Naive thymus-derived CD4-positive, alpha-beta T cell (primary cell): ENCODE measurements at regions of chr1 and their contacts with region 1.

Region 1: DNA sequence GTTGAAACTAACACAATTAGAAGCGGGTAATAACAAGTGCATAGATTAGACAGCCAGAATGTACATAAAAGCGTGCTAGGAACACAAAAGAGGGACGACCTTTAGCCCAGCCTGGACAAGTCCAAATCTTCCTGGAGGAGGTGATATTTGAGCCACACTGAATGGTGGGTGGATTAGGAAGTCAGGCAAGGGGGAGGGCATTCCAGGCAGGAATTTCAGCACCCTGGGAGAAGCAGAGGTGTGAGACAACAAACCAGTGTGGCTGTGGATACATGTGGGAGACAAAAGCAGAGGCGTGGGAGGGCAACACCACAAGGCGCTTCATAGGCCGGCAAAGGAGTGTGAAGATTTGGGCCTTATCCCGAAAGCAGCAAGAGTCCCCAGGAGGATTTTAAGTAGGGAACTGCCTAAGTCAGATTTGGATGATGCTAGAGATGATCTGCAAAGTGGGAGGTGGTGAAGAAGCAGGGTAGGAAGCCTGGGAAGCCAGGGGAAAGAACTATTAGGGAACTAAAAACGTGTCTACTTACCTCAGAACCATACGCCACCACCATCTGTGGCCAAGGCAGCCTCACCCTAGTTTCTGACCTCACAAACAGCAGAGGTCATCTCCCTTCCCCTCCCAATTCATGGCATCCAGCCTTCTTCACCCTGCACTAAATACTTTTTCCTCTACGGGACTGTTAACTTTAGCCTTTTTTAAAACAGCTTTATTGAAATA is 81.8 kb downstream of the GLUL start:
- DNase-seq: no peak
- ATAC-seq: no peak
- H3K4me3 ChIP-seq: no peak overlapping the region
- H3K4me3 Mint-ChIP-seq: no peak overlapping the region
- H3K27ac ChIP-seq: no peak overlapping the region
- H3K27ac Mint-ChIP-seq: no peak overlapping the region
- H3K4me1 ChIP-seq: no peaks in the 10 kb centered on the region
- H3K4me1 Mint-ChIP-seq: peaks cover 0 to 2% (median 0%) of the 10 kb centered on the region in 7 donors
- H3K27me3 ChIP-seq: no peaks in the 10 kb centered on the region
- H3K27me3 Mint-ChIP-seq: peaks cover 0 to 12% (median 0%) of the 10 kb centered on the region in 5 donors

Region 2: DNA sequence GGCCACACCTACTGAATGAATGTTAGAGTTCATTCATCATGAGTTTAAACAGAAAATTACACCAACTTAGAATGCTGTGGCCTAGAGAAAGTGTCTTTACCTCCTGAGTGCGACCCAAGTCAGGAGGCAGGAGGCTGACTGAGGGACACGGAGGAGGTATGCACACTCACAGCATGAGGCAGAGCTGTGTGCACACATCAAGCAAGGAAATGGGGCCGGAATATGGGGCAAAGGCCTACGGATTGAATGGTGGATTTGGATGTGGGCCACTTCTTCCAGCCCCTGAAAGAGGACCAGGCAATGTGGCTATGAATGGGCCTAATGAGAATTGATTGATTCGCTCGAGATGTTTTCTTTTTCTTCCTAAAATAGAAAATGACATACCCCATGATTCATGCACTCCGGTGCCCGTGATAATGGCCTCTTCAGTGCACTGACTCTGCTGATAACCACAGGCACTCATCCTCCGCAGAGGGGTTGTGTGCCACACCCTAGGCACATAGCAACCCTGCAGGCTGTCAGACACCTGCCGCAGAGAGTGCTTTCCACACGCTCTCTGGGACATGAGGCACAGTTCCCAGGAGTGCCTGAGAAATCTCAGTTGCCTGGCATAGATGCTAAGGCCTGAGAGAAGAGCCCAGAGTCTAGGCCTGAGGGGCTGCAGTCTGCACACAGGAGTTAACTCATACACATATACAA is 73.7 kb before region 1 on chr1:
- CTCF ChIA-PET with region 1: no interaction called
- POLR2A ChIA-PET with region 1: no interaction called
- intact Hi-C with region 1: loop called in 1 of 2 experiments (anchors 2 kb)
- DNase-seq: no peak
- ATAC-seq: peak; percentile 18
- H3K4me3 ChIP-seq: no peak overlapping the region
- H3K4me3 Mint-ChIP-seq: peak overlapping the region in 3 of 10 donors; percentile 0 to 30 (median 10)
- H3K27ac ChIP-seq: no peak overlapping the region
- H3K27ac Mint-ChIP-seq: peak overlapping the region in 4 of 9 donors; percentile 12 to 71 (median 42)
- H3K4me1 ChIP-seq: no peaks in the 10 kb centered on the region
- H3K4me1 Mint-ChIP-seq: peaks cover 6 to 23% (median 13%) of the 10 kb centered on the region in 7 donors
- H3K27me3 ChIP-seq: no peaks in the 10 kb centered on the region
- H3K27me3 Mint-ChIP-seq: peaks cover 0 to 4% (median 0%) of the 10 kb centered on the region in 5 donors

Region 3: GRCh38 chr1:182507665-182508064 is 197.9 kb after region 1 on chr1:
- CTCF ChIA-PET with region 1: no interaction called
- POLR2A ChIA-PET with region 1: no interaction called
- intact Hi-C with region 1: no loop called
- DNase-seq: no peak
- ATAC-seq: no peak
- H3K4me3 ChIP-seq: no peak overlapping the region
- H3K4me3 Mint-ChIP-seq: no peak overlapping the region
- H3K27ac ChIP-seq: no peak overlapping the region
- H3K27ac Mint-ChIP-seq: no peak overlapping the region
- H3K4me1 ChIP-seq: no peaks in the 10 kb centered on the region
- H3K4me1 Mint-ChIP-seq: no peaks in the 10 kb centered on the region
- H3K27me3 ChIP-seq: no peaks in the 10 kb centered on the region
- H3K27me3 Mint-ChIP-seq: peaks cover 5 to 27% (median 19%) of the 10 kb centered on the region in 5 donors

Region 4: DNA sequence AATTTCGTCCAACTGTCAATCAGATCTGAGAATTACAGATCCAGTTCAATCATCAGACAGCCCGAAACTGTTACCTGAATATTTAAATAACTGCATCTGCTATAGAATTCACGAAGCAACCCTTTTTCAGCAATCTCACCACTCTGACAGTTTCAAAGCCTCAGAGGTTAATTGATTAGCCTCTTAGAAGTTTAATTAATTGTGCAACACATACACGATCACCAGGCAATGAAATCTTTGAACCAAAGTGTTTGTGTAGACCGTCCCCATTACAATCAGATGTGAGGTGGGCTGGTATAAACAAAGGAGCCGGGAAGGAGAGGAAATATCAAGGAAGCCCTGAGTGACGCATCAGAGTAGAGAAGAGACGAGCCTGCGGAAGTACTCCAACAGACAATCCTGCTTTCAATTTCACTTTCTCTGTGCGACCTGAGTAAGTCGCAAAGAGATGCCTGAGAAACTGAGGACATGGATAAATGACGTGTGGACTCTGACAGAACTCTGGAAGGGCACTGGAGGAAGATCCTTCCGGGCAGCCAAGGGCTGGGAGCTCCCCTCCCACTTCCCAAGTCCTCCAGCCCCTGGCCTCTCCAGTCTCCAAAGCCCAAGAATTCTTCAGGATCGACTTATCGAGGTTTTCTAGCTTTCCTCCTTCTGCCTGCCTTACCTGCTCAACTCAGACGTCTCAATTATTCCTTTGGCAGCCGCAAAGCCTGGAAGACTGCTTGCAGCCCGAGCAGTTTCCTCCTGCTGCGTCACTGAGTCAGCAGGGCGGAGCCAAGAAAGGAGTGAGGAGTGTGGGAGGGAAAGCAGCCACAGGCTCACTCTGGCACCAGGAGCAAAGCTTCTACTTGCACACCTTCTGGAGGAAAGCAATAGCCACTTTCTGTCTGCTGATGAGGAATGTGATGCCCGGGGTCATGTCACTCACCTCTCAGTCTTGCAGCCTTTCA is 279.0 kb after region 1 on chr1 and contains the start of gene RNASEL:
- CTCF ChIA-PET with region 1: no interaction called
- POLR2A ChIA-PET with region 1: no interaction called
- intact Hi-C with region 1: no loop called
- DNase-seq: peak; percentile 24 to 72 (median 65)
- ATAC-seq: peak; percentile 89
- H3K4me3 ChIP-seq: peak within 1 kb of the TSS; percentile 92
- H3K4me3 Mint-ChIP-seq: peak within 1 kb of the TSS; percentile 93 to 99 (median 98)
- H3K27ac ChIP-seq: peak within 1 kb of the TSS; percentile 97
- H3K27ac Mint-ChIP-seq: peak within 1 kb of the TSS; percentile 97 to 100 (median 99)
- H3K4me1 ChIP-seq: peaks cover 23 to 27% of the 10 kb centered on the region in 2 donors
- H3K4me1 Mint-ChIP-seq: peaks cover 31 to 60% (median 51%) of the 10 kb centered on the region in 7 donors
- H3K27me3 ChIP-seq: no peaks in the 10 kb centered on the region
- H3K27me3 Mint-ChIP-seq: peaks cover 0 to 9% (median 0%) of the 10 kb centered on the region in 5 donors
- total RNA-seq, gene RNASEL: 5.7 to 34.9 (median 12.1) TPM